ENCODE measurements at regions of chr10 and their contacts with region 1.

Region 1: GRCh38 chr10:23994479-23995046 is 214.4 kb upstream of the KIAA1217 start:
- DNase-seq: peak; percentile 8
- ATAC-seq: 0 out of 2 replicates have a peak, but pooled peaks have one; percentile 63
- H3K4me3 ChIP-seq: no peak overlapping the region
- H3K27ac ChIP-seq: no peak overlapping the region
- H3K4me1 ChIP-seq: no peaks in the 10 kb centered on the region
- H3K27me3 ChIP-seq: no peaks in the 10 kb centered on the region
- CTCF ChIP-seq: peak; percentile 38 to 81 (median 71); a peak in 5 of 6 replicates
- POLR2A ChIP-seq: no peak
- RAD21 ChIP-seq: peak; percentile 63

Region 2: DNA sequence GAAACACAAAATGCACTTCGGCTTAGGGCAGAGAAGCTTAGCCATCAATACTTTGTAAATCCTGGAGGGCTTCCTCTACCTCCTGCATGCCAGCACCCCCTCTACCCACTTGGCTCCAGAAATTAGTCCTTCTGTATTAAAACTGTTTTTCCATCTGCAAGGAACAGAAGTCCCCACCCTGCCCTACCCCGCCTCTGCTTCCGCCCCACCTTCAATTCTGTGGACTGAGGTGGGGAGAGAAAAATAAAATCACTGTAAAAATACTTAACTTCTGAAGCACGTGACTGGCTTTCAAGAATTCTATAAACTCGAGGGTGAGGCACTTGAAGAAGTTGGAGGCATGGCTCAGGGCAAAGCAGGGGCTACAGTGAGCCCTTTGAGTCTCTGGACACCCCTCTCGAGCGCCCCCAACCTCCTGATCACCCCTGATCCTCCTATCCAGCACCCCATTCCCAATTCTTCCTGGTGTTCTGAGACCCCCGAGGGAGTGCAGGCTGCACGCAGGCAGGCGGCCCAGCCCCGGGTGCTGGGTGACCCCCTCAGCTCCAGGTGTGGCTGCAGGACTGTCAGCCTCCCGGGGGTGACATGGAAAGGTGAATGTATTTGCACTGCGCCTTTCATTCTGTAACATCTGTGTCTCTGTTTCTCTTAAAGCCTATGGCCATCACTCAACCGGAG is 207.1 kb after region 1 on chr10:
- CTCF ChIA-PET with region 1: interaction called, 13 read pairs
- POLR2A ChIA-PET with region 1: no interaction called
- RAD21 ChIA-PET with region 1: no interaction called
- intact Hi-C with region 1: loop called (anchors 2 kb)
- DNase-seq: no peak
- ATAC-seq: no peak
- H3K4me3 ChIP-seq: no peak overlapping the region
- H3K27ac ChIP-seq: no peak overlapping the region
- H3K4me1 ChIP-seq: no peaks in the 10 kb centered on the region
- H3K27me3 ChIP-seq: 0 out of 2 replicates have a peak, but pooled peaks cover 2% of the 10 kb centered on the region
- CTCF ChIP-seq: no peak
- POLR2A ChIP-seq: no peak
- RAD21 ChIP-seq: no peak

Region 3: GRCh38 chr10:24360282-24361127 is 365.9 kb after region 1 on chr10:
- CTCF ChIA-PET with region 1: interaction called, 9 read pairs
- POLR2A ChIA-PET with region 1: no interaction called
- RAD21 ChIA-PET with region 1: no interaction called
- intact Hi-C with region 1: loop called (anchors 1 kb)
- DNase-seq: peak; percentile 47
- ATAC-seq: peak; percentile 91
- H3K4me3 ChIP-seq: no peak overlapping the region
- H3K27ac ChIP-seq: no peak overlapping the region
- H3K4me1 ChIP-seq: no peaks in the 10 kb centered on the region
- H3K27me3 ChIP-seq: no peaks in the 10 kb centered on the region
- CTCF ChIP-seq: peak; percentile 19 to 77 (median 71); a peak in 5 of 6 replicates
- POLR2A ChIP-seq: no peak
- RAD21 ChIP-seq: peak; percentile 64